Ascending aorta (tissue), 2 donors: ENCODE measurements at regions of chr1 and their contacts with region 1.

Region 1: DNA sequence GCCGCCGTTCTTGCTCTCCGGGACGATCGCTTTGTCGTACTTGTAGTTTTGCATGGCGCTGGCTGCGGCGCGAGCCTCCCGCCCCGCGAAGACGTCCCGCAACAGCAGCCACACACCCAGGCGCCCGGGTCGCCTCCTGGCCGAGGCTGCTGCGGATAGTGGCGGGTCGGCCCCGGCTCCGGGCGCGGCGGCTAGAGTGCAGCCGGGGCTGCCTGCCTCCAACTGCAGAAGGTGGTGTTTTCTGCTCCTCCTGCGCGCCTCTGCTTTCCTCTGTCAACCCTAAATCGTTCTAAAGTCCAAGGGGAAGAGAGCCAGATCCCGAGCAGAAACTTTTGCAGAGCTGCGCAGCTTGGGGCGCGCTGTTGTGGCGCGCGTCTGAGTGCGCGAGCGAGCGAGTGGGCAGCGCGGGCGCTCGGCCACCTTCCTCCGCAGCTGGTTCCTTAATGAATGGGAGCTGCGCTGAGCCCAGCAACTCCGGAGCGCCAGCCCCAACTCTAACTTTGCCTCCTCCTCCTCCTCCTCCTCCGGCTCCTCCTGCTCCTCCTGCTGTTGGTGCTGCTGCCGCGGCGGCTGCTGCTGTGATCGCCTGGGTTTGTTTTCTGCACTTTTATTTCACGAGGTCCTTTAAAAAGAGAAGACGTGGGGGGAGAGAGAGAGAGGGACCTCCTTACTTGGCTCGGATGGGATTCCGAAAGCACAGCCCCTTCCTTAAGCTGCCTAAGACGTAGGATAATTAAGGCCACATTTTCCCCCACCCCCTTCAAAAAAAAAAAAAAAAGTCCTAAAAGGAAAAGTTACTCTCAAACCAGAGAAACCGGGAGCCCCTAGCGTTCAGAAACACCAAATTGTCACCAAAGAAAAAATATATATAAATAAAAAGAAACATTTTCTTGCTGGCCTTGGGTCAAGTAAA is at the start of gene PLPP3:
- DNase-seq: peak; percentile 52 to 94
- H3K4me3 ChIP-seq: peak within 1 kb of the TSS; percentile 92 to 94
- H3K27ac ChIP-seq: peak within 1 kb of the TSS; percentile 94 to 99
- H3K4me1 ChIP-seq: peaks cover 0 to 12% of the 10 kb centered on the region in 2 donors
- H3K27me3 ChIP-seq: no peaks in the 10 kb centered on the region
- CTCF ChIP-seq: peak; percentile 17 to 58 (median 31)
- total RNA-seq, gene PLPP3: 87.7 TPM

Region 2: GRCh38 chr1:55375617-55376258 is 1203.5 kb before region 1 on chr1:
- intact Hi-C with region 1: loop called (anchors 5 kb)
- DNase-seq: no peak
- H3K4me3 ChIP-seq: no peak overlapping the region
- H3K27ac ChIP-seq: no peak overlapping the region
- H3K4me1 ChIP-seq: no peaks in the 10 kb centered on the region
- H3K27me3 ChIP-seq: no peaks in the 10 kb centered on the region
- CTCF ChIP-seq: peak; percentile 74 to 95 (median 90)

Region 3: DNA sequence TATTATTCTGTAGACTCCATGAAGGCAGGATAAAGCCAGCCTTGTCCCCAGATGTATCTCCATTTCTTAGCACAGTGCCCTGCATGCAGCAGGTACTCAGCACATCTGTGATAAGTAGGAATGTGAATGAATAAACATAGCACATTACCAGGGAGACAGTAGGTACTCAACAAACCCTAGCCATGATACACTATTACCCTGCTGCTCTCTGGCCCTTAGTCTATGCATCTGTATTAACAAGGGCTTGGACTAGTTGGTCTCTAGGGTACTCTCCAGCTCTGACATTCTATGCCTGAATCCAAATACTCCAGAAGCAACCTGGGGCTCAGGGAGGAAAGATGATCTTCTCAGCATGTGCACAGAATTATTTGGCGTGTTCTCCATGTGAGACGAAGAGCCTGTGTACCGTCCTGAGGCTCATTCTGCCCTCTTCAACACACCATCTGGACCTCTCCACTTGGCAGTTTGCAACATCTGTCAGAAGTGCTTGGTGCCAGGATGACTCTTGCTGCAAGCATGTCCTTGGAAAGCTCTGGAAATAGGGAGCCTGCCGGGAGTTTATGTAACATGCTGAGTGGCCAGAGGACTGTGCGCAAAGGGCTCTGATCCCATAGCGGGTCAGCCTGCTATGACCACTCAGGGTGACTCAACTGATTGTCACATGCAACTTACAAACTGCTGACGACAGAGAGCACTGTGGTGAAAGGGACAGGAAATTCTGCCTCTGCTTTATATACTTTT is 1135.9 kb before region 1 on chr1:
- intact Hi-C with region 1: loop called (anchors 5 kb)
- DNase-seq: peak; percentile 91 to 97
- H3K4me3 ChIP-seq: no peak overlapping the region
- H3K27ac ChIP-seq: peak overlapping the region; percentile 62 to 79
- H3K4me1 ChIP-seq: peaks cover 5 to 16% of the 10 kb centered on the region in 2 donors
- H3K27me3 ChIP-seq: no peaks in the 10 kb centered on the region
- CTCF ChIP-seq: no peak

Region 4: DNA sequence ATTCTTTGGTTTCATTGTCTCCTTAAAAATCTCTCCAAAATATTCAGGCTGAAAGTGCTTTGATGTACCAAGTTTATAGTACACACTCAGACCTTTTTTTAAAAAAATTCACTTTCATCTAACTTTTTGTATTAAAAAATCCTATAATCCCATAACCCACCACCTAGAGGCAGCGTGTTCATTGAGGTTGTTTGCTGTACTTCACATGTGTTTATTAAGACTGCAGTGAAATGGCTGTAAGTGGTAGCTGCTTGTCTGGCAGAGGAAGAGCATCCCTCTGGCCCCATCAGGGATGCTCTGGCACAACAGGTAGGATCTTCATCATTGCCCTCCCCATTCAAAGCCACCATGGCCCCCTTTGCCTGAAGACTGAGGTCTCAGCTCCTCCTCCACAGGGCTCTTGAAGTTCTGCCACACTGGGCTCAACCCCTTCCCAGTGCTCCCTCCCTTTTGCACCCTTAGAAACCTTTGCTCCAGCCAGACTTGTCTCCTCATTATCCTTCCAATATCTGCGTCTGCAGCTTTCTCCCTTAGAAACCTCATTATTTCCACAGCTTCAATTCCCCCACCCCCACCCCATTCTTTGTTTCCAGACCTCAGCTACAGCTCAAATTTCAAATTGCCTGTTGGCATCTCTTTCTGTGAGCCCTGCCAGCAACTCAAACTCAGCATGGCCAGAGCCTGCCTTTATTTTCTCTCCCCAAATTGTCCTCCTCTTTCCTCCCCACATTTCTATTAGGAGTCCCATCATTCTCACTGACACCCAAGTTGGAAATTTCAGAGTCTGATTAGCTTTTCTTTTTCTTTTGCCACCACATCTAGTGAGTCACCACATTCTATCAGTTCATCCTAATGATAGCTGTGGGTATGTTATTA is 994.5 kb before region 1 on chr1:
- intact Hi-C with region 1: loop called (anchors 10 kb)
- DNase-seq: no peak
- H3K4me3 ChIP-seq: no peak overlapping the region
- H3K27ac ChIP-seq: peak overlapping the region; percentile 27 to 28
- H3K4me1 ChIP-seq: peaks cover 11 to 40% of the 10 kb centered on the region in 2 donors
- H3K27me3 ChIP-seq: no peaks in the 10 kb centered on the region
- CTCF ChIP-seq: no peak

Region 5: DNA sequence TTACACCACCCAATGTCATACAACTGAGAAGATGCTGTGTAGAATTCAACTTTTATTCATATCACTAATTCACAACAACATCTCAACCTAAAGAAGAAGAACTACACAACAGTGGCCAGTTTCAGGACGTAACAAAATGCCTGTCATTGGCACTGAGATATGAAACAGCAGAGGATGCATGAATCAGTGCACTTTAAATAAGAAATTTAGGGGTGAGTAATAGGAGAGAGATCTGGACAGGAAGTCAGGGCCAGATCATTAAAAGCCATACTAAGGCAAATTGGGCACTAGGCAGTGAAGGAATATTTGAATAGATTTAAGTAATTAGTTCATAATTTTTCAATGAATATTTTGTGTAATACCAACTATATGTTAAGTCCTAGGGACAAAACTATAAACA is 510.3 kb before region 1 on chr1:
- intact Hi-C with region 1: loop called (anchors 2 kb)
- DNase-seq: no peak
- H3K4me3 ChIP-seq: no peak overlapping the region
- H3K27ac ChIP-seq: peak overlapping the region; percentile 72 to 90
- H3K4me1 ChIP-seq: peaks cover 10 to 38% of the 10 kb centered on the region in 2 donors
- H3K27me3 ChIP-seq: no peaks in the 10 kb centered on the region
- CTCF ChIP-seq: no peak

Region 6: DNA sequence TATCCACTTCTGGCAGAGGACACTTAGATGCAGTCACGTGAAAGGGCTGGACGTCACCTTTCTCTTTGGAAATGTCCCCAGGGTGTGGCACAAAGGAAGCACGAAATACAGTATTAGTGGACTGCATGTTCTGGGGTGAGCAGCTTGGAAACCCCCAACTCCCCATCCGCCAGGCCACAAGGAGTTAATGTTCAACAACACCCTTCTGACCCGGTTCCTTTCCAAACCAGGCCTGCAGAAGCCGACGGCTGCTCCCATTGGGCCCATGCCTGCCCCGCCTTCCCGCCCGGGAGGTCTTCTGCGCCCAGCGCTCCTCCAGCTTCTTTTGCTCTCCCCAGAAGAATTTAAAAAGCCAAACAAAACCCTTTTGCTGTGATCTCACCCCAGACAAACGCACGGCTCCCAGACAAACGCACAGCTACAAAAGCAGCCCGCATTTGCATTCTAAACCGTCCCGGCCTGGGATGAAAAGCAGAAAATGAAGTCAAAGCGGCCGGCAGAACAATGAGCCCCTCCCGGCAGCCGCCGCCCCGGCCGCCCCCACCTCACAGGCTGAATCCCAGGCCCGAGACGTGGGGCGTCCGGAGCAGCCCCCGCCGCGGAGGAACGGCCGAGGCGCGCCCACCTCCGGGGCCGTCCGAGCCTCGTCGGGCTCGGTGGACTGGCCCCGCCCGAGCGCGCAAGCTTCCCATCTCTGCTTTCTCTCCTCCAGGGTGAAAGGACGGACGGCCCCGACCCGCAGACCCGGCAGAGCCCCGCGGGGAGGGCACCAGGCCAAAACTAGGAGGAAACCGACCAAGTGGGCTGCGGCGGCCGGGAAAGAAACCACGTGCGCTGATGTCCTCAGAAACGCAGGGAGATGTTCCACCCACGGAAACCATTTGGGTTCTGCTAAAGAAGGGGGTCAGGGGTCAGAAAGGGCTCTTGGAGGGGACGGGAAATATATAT is 101.8 kb before region 1 on chr1:
- intact Hi-C with region 1: loop called (anchors 10 kb)
- DNase-seq: peak in 1 of 2 donors; percentile 77
- H3K4me3 ChIP-seq: peak overlapping the region; percentile 66 to 94
- H3K27ac ChIP-seq: peak overlapping the region; percentile 80 to 89
- H3K4me1 ChIP-seq: no peaks in the 10 kb centered on the region
- H3K27me3 ChIP-seq: no peaks in the 10 kb centered on the region
- CTCF ChIP-seq: no peak